ENCODE measurements at regions of chr10 and their contacts with region 1.

Region 1: GRCh38 chr10:21270976-21271375 is 254.5 kb downstream of the SKIDA1 start:
- DNase-seq: no peak
- H3K4me3 Mint-ChIP-seq: no peak overlapping the region
- H3K27ac Mint-ChIP-seq: no peak overlapping the region
- H3K4me1 Mint-ChIP-seq: no peaks in the 10 kb centered on the region
- H3K27me3 Mint-ChIP-seq: peaks cover 3% of the 10 kb centered on the region

Region 2: DNA sequence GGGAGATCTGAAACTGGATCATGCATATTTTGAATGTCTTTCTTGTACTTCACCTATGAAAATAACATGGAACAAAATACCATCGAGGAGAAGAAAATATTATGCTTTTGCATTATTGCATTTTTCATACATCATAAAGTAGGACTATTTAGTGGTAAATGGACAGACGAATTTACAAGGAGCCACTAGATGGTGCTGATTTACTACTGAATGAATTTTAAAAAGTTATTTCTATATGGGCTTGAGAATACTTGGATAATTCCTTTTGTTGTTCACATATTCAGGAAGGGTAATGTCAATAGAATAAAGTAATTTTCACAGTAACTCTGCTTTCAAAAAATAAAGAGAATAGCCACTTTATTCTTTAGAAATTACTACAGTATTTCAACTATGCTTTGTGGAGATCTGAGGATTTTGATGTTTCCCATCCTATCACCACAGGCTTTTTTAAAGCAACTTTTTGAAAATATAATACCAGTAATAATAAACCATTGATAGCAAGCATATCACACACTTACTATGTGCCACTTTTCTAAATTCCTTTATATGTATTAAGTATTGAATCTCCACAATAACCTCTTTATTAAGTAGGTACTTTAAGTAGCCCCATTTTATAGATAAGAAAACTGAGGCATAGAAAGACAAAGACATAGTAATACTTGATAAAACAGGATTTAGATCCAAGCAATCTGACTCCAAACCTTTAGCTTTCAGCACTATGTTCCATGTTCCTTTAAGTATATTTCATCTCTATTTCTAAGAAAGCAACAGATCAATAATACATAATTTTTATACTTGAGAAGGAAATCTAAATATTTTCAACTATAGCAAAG is 412.5 kb before region 1 on chr10:
- CTCF ChIA-PET with region 1: interaction called, 3 read pairs
- intact Hi-C with region 1: loop called (anchors 1 kb)
- DNase-seq: no peak
- H3K4me3 Mint-ChIP-seq: no peak overlapping the region
- H3K27ac Mint-ChIP-seq: no peak overlapping the region
- H3K4me1 Mint-ChIP-seq: no peaks in the 10 kb centered on the region
- H3K27me3 Mint-ChIP-seq: no peaks in the 10 kb centered on the region

Region 3: GRCh38 chr10:21078410-21079329 is 192.3 kb before region 1 on chr10:
- CTCF ChIA-PET with region 1: no interaction called
- intact Hi-C with region 1: loop called (anchors 2 kb)
- DNase-seq: peak; percentile 54
- H3K4me3 Mint-ChIP-seq: no peak overlapping the region
- H3K27ac Mint-ChIP-seq: no peak overlapping the region
- H3K4me1 Mint-ChIP-seq: no peaks in the 10 kb centered on the region
- H3K27me3 Mint-ChIP-seq: peaks cover 5% of the 10 kb centered on the region

Measured in activated naive CD4-positive, alpha-beta T cell treated with anti-CD3 and anti-CD28 coated beads for 36 hours (primary cell).